Activated CD8-positive, alpha-beta T cell treated with anti-CD3 and anti-CD28 coated beads, Interleukin-2, amount 10 ng/mL, durations not matched to agents 7 days and 5 days (primary cell): ENCODE measurements at regions of chr10 and their contacts with region 1.

Region 1: GRCh38 chr10:94443549-94443948 is 41.2 kb downstream of the TBC1D12 start:
- DNase-seq: no peak
- ATAC-seq: no peak
- H3K4me3 Mint-ChIP-seq: no peak overlapping the region
- H3K27ac Mint-ChIP-seq: no peak overlapping the region
- H3K4me1 Mint-ChIP-seq: no peaks in the 10 kb centered on the region
- H3K27me3 Mint-ChIP-seq: peaks cover 7% of the 10 kb centered on the region

Region 2: DNA sequence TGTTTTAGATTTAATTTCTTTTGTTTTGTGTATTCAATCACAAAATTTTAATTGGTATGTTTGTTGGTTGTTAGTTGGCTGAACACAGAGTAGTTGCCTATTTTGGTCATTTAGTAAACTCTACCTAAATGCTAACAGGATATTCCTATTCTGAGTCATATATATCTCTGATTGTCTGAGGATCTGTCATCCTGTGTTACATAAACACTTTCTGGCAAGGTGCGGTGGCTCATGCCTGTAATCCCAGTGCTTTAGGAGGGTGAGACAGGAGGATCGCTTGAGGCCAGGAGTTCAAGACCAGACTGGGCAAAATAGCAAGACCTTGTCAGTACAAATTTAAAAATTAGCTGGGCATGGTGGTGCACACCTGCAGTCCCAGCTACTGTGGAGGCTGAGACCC is 271.2 kb before region 1 on chr10:
- CTCF ChIA-PET with region 1: no interaction called
- POLR2A ChIA-PET with region 1: no interaction called
- DNase-seq: no peak
- ATAC-seq: no peak
- H3K4me3 Mint-ChIP-seq: no peak overlapping the region
- H3K27ac Mint-ChIP-seq: no peak overlapping the region
- H3K4me1 Mint-ChIP-seq: no peaks in the 10 kb centered on the region
- H3K27me3 Mint-ChIP-seq: no peaks in the 10 kb centered on the region

Region 3: GRCh38 chr10:94279835-94280709 is 163.5 kb before region 1 on chr10:
- CTCF ChIA-PET with region 1: interaction called, 11 read pairs
- POLR2A ChIA-PET with region 1: no interaction called
- DNase-seq: peak; percentile 66
- ATAC-seq: peak; percentile 82
- H3K4me3 Mint-ChIP-seq: no peak overlapping the region
- H3K27ac Mint-ChIP-seq: no peak overlapping the region
- H3K4me1 Mint-ChIP-seq: no peaks in the 10 kb centered on the region
- H3K27me3 Mint-ChIP-seq: peaks cover 24% of the 10 kb centered on the region

Region 4: GRCh38 chr10:94591461-94592205 is 148.1 kb after region 1 on chr10:
- CTCF ChIA-PET with region 1: no interaction called
- POLR2A ChIA-PET with region 1: no interaction called
- DNase-seq: no peak
- ATAC-seq: no peak
- H3K4me3 Mint-ChIP-seq: no peak overlapping the region
- H3K27ac Mint-ChIP-seq: no peak overlapping the region
- H3K4me1 Mint-ChIP-seq: peaks cover 4% of the 10 kb centered on the region
- H3K27me3 Mint-ChIP-seq: no peaks in the 10 kb centered on the region